B cell (primary cell): ENCODE measurements at regions of chr5 and their contacts with region 1.

Region 1: DNA sequence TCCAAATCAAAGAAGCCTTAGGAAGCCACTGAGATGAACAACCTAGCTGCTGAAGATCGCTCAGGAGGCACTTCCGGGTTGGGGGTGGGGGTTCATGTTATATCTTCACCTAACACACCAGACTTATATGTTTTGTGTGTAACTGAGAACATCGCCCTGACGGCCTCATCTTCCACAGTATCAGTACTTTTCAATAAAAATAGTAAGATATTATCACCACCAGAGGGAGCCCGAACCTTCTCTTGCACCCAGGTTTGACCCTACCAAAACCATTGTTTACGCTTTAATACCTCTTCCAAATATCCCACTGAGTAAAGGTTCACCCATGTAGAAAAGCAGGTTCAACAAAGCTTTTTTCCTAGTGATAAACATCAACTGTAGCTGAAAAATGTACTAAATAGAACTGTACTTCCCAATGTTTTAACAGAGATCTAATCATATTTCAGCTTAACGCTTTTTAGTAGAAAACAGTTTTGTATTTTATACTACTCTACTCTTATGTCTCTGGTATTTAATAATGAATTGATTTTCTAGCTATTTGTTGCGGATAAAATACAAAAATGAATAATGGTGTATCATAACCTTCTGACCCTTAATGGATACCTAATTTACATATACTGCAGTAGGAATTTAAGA is 244.0 kb downstream of the EPB41L4A start:
- DNase-seq: peak; percentile 70
- ATAC-seq: peak; percentile 64
- H3K4me3 ChIP-seq: no peak overlapping the region
- H3K4me3 Mint-ChIP-seq: no peak overlapping the region
- H3K27ac ChIP-seq: no peak overlapping the region
- H3K27ac Mint-ChIP-seq: no peak overlapping the region
- H3K4me1 ChIP-seq: peaks cover 3% of the 10 kb centered on the region in 2 donors
- H3K4me1 Mint-ChIP-seq: peaks cover 4% of the 10 kb centered on the region
- H3K27me3 ChIP-seq: no peaks in the 10 kb centered on the region
- H3K27me3 Mint-ChIP-seq: no peaks in the 10 kb centered on the region
- CTCF ChIP-seq: peak; percentile 86

Region 2: DNA sequence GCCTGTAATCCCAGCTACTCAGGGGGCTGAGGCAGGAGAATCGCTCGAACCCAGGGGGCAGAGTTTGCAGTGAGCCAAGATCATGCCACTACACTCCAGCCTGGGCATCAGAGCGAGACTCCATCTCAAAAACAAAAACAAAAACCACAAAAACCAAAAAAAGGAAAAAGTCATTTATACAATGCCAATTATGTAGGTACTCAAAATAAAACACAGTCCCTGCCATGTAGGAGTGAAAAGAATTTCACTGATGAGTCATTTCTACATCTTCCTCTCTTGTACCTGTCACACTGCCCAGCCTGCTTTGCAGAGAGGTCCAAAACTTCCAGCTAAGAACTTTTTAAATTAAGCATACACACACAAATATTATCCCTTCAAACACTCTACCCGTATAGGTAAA is 28.2 kb after region 1 on chr5:
- CTCF ChIA-PET with region 1: no interaction called
- POLR2A ChIA-PET with region 1: no interaction called
- intact Hi-C with region 1: no loop called
- DNase-seq: no peak
- ATAC-seq: no peak
- H3K4me3 ChIP-seq: no peak overlapping the region
- H3K4me3 Mint-ChIP-seq: no peak overlapping the region
- H3K27ac ChIP-seq: no peak overlapping the region
- H3K27ac Mint-ChIP-seq: no peak overlapping the region
- H3K4me1 ChIP-seq: no peaks in the 10 kb centered on the region
- H3K4me1 Mint-ChIP-seq: no peaks in the 10 kb centered on the region
- H3K27me3 ChIP-seq: peaks cover 0 to 5% (median 0%) of the 10 kb centered on the region in 4 experiments
- H3K27me3 Mint-ChIP-seq: peaks cover 50% of the 10 kb centered on the region
- CTCF ChIP-seq: no peak

Region 3: DNA sequence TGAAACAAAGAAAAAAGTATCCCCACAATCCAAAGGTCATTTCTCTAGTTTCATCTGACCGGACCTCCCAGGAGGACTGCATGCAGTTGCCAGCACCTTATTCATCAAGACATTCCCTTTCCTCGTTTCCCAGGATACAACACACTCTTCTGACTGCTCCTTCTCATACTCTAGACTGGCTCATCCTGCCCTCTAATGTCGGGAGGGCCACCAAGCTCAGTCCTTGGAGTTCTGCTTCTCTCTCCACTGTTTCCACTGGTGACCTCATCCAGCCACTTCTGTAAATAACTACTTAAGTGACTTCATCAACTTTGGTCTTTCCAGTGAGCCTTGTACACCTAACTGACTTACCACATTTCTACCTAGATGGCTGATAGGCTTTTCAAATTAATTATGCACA is 64.9 kb after region 1 on chr5:
- CTCF ChIA-PET with region 1: no interaction called
- POLR2A ChIA-PET with region 1: no interaction called
- intact Hi-C with region 1: no loop called
- DNase-seq: no peak
- ATAC-seq: no peak
- H3K4me3 ChIP-seq: no peak overlapping the region
- H3K4me3 Mint-ChIP-seq: no peak overlapping the region
- H3K27ac ChIP-seq: no peak overlapping the region
- H3K27ac Mint-ChIP-seq: no peak overlapping the region
- H3K4me1 ChIP-seq: no peaks in the 10 kb centered on the region
- H3K4me1 Mint-ChIP-seq: no peaks in the 10 kb centered on the region
- H3K27me3 ChIP-seq: no peaks in the 10 kb centered on the region
- H3K27me3 Mint-ChIP-seq: peaks cover 8% of the 10 kb centered on the region
- CTCF ChIP-seq: no peak

Region 4: GRCh38 chr5:112604732-112605630 is 429.9 kb after region 1 on chr5:
- CTCF ChIA-PET with region 1: interaction called, 8 read pairs
- POLR2A ChIA-PET with region 1: no interaction called
- intact Hi-C with region 1: loop called (anchors 1 kb)
- DNase-seq: peak; percentile 59
- ATAC-seq: peak; percentile 91
- H3K4me3 ChIP-seq: no peak overlapping the region
- H3K4me3 Mint-ChIP-seq: no peak overlapping the region
- H3K27ac ChIP-seq: no peak overlapping the region
- H3K27ac Mint-ChIP-seq: no peak overlapping the region
- H3K4me1 ChIP-seq: peaks cover 3 to 6% of the 10 kb centered on the region in 2 donors
- H3K4me1 Mint-ChIP-seq: peaks cover 9% of the 10 kb centered on the region
- H3K27me3 ChIP-seq: peaks cover 0 to 6% (median 0%) of the 10 kb centered on the region in 4 experiments
- H3K27me3 Mint-ChIP-seq: no peaks in the 10 kb centered on the region
- CTCF ChIP-seq: peak; percentile 26

Region 5: DNA sequence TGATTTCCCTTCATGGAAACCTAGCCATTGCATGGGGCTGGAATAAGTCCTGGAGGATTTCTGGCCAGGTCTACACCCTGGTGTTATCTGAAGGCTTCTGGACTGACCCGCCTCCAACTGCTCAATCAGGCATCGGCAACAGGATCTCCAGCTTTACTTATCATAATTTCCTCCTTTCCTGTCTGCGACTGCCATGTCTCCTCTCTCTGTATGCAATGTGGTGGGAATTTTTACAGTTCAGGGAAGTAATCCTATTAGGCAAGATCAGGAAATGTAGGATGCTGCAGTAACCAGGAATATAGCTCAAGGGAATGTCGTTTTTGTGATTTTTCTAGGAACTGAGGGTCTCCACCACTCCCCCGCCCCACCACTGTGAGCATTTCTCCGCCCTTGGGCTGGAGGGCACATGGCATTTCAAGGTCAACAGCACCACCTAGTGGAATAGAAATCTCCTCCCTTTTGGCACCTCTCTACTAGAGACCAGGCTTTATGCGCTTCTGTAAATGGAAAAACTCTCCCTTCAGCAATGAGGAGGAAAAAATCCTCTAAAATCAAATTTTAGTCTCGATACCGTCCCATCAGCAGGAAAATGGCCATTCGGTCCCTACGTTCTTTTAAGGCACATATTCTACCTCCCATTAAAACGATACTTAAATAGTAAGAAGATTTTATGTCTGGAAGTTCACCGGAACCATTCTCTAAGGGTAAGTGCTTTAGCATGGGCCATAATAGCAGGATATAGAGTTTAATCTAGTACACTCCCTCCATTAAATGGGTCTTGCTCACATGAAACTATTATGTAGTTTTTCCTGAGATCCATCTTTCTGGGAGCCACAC is 1431.4 kb after region 1 on chr5:
- CTCF ChIA-PET with region 1: interaction called, 6 read pairs
- POLR2A ChIA-PET with region 1: no interaction called
- intact Hi-C with region 1: loop called (anchors 2 kb)
- DNase-seq: peak; percentile 61
- ATAC-seq: peak; percentile 57
- H3K4me3 ChIP-seq: no peak overlapping the region
- H3K4me3 Mint-ChIP-seq: no peak overlapping the region
- H3K27ac ChIP-seq: no peak overlapping the region
- H3K27ac Mint-ChIP-seq: no peak overlapping the region
- H3K4me1 ChIP-seq: peaks cover 0 to 3% of the 10 kb centered on the region in 2 donors
- H3K4me1 Mint-ChIP-seq: no peaks in the 10 kb centered on the region
- H3K27me3 ChIP-seq: peaks cover 0 to 21% (median 11%) of the 10 kb centered on the region in 4 experiments
- H3K27me3 Mint-ChIP-seq: peaks cover 37% of the 10 kb centered on the region
- CTCF ChIP-seq: peak; percentile 85